Transverse colon (tissue), 4 donors: ENCODE measurements at regions of chr6 and their contacts with region 1.

Region 1: GRCh38 chr6:41836022-41836659 is 48.6 kb downstream of the TOMM6 start:
- DNase-seq: no peak
- H3K4me3 ChIP-seq: no peak overlapping the region
- H3K27ac ChIP-seq: no peak overlapping the region
- H3K4me1 ChIP-seq: no peaks in the 10 kb centered on the region
- H3K27me3 ChIP-seq: no peaks in the 10 kb centered on the region
- CTCF ChIP-seq: no peak
- EP300 ChIP-seq: no peak
- POLR2A ChIP-seq: no peak

Region 2: GRCh38 chr6:41798901-41799558 is 37.1 kb before region 1 on chr6:
- in situ Hi-C with region 1: no loop called
- intact Hi-C with region 1: loop called (anchors 1 kb)
- DNase-seq: no peak
- H3K4me3 ChIP-seq: no peak overlapping the region
- H3K27ac ChIP-seq: no peak overlapping the region
- H3K4me1 ChIP-seq: no peaks in the 10 kb centered on the region
- H3K27me3 ChIP-seq: no peaks in the 10 kb centered on the region
- CTCF ChIP-seq: no peak
- EP300 ChIP-seq: no peak
- POLR2A ChIP-seq: no peak

Region 3: DNA sequence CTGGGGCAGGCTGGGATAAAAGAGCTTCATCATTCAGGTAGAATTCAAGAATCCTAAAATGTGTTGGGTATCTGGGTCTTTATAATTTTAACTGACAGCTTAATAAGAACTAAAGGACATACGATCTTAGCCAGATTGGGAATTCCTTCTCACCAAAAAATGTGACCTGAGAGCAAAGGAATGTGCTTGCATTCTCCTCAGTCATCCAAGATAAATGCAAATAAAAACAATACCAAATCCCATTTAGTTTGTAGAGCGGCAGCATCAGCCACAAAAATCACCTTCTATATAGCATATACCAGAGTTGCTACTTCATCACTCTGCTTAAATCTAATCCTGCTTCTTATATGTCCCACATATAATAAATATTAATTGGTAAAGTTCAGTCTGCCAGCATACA is 42.1 kb after region 1 on chr6:
- in situ Hi-C with region 1: no loop called
- intact Hi-C with region 1: no loop called
- DNase-seq: no peak
- H3K4me3 ChIP-seq: no peak overlapping the region
- H3K27ac ChIP-seq: no peak overlapping the region
- H3K4me1 ChIP-seq: no peaks in the 10 kb centered on the region
- H3K27me3 ChIP-seq: no peaks in the 10 kb centered on the region
- CTCF ChIP-seq: no peak
- EP300 ChIP-seq: no peak
- POLR2A ChIP-seq: no peak

Region 4: GRCh38 chr6:41984623-41985022 is 148.5 kb after region 1 on chr6:
- in situ Hi-C with region 1: no loop called
- intact Hi-C with region 1: no loop called
- DNase-seq: no peak
- H3K4me3 ChIP-seq: no peak overlapping the region
- H3K27ac ChIP-seq: no peak overlapping the region
- H3K4me1 ChIP-seq: no peaks in the 10 kb centered on the region
- H3K27me3 ChIP-seq: no peaks in the 10 kb centered on the region
- CTCF ChIP-seq: no peak
- EP300 ChIP-seq: no peak
- POLR2A ChIP-seq: no peak